ENCODE measurements at regions of chr7 and their contacts with region 1.

Region 1: DNA sequence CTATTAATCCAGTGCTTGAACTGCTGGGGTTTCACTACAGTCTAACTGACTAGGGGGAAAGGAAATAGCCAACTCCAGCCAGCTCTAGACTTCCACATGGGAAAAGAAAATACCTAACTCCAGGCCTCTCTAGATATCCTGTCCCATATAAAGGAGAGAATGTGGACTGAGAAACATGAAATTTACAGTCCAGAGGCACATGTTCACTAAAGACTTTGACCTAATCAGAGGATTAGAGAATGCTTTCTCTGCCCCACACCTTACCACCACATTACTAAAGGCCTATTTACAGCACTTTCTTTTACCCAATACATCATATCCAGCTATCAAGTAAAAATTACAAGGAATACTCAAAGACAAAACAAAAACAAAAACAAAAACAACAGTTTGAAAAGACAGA is 164.2 kb downstream of the PCLO start:
- DNase-seq: no peak
- ATAC-seq: no peak
- H3K4me3 ChIP-seq: no peak overlapping the region
- H3K27ac ChIP-seq: no peak overlapping the region
- H3K4me1 ChIP-seq: no peaks in the 10 kb centered on the region
- H3K27me3 ChIP-seq: no peaks in the 10 kb centered on the region
- CTCF ChIP-seq: no peak
- POLR2A ChIP-seq: no peak
- RAD21 ChIP-seq: no peak

Region 2: DNA sequence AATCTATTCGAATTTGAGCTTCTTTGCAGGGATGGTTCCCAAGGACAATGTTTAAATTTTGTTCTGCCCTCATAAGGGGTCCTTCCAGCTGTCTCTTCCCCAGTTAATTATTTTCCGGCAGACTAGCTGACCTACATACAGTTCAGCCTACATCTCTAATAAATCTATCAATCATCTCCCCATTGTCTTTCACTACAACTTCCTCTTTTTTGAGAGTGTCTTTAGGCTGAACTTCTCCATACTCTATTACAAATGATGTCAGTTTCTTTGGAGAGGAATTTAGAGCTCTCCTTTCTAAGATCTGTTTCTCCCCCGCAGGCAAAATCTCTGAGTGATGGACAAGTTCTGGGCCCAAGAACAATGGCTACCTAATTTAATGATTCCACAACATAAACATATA is 42.0 kb after region 1 on chr7:
- CTCF ChIA-PET with region 1: no interaction called
- POLR2A ChIA-PET with region 1: no interaction called
- dilution Hi-C with region 1: no loop called
- in situ Hi-C with region 1: no loop called
- intact Hi-C with region 1: loop called (anchors 10 kb)
- DNase-seq: no peak
- ATAC-seq: no peak
- H3K4me3 ChIP-seq: no peak overlapping the region
- H3K27ac ChIP-seq: no peak overlapping the region
- H3K4me1 ChIP-seq: no peaks in the 10 kb centered on the region
- H3K27me3 ChIP-seq: no peaks in the 10 kb centered on the region
- CTCF ChIP-seq: no peak
- POLR2A ChIP-seq: no peak
- RAD21 ChIP-seq: no peak

Measured in IMR-90 (cell line).